PC-3 (cell line): ENCODE measurements at regions of chr3 and their contacts with region 1.

Region 1: DNA sequence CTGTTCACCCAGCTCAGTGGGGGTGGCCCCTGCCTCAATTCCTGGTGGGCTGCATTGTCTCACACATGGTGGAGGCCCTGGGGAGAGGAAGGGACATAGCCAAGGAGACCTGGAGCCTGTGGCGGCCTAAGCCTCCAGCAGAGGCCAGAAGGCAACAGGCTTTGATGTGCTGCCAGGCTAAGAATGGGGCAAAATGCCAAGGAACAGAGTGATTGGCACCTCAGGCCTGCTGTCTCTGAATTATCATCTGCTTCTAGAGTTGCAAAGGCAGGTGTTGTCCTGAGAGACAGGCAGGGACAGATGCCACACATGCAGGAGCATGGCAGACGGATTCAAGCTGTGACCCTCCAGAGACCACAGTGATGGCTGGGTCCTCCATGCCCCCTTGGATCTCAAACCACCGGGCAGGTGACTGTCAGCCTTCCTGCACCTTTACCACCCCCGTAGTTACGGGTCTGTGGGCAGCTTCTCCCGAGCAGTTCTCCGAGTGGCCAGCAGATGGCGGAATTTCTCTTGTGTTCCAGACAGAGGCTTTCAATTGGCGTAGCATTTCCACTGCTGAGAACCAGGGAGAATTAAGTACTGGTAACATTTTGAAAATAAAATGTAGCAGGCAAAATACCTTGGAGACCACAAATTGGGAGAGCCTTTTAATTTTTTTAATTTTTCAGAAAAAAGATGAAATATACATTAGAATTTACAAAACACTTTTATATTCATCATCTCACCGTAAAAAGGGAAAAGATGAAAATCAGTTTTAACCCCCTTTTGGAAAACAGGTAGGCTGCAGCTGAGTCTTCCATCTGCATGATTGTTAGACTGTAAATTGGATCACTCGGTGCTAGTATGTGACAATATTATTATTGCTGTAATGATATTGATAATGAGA is 525.5 kb upstream of the CFAP20DC start:
- DNase-seq: peak; percentile 92
- ATAC-seq: peak; percentile 75
- H3K4me3 ChIP-seq: no peak overlapping the region
- H3K27ac ChIP-seq: no peak overlapping the region
- H3K4me1 ChIP-seq: peaks cover 22% of the 10 kb centered on the region
- H3K27me3 ChIP-seq: no peaks in the 10 kb centered on the region
- CTCF ChIP-seq: peak; percentile 97

Region 2: GRCh38 chr3:58824285-58824684 is 751.1 kb before region 1 on chr3:
- CTCF ChIA-PET with region 1: no interaction called
- POLR2A ChIA-PET with region 1: no interaction called
- intact Hi-C with region 1: loop called (anchors 2 kb)
- DNase-seq: peak; percentile 81
- ATAC-seq: peak; percentile 81
- H3K4me3 ChIP-seq: no peak overlapping the region
- H3K27ac ChIP-seq: no peak overlapping the region
- H3K4me1 ChIP-seq: no peaks in the 10 kb centered on the region
- H3K27me3 ChIP-seq: no peaks in the 10 kb centered on the region
- CTCF ChIP-seq: peak; percentile 97

Region 3: DNA sequence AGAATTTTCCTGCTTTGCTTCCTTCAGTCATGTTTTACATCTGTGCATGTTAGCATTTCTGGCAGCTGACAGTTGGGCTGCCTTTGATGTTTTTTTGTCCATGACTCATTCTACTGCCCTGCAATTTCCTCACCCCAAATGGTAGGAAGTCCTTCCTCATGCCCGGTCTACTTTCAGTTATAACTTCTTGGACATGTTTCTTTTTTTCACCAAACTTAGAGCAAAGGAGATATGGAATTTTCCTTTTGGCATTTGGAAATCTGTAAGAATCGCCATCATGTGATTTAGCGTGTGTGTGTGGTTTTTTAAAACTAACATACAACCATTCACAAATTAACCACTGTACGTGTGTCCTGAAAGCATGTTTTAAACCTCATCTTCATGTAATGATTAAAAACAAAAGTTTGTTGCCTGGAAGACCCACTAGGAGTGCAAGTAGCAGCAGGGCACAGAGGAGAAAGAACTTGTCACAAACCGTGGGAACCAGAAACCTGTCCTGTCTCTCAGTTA is 94.8 kb before region 1 on chr3:
- CTCF ChIA-PET with region 1: no interaction called
- POLR2A ChIA-PET with region 1: no interaction called
- intact Hi-C with region 1: loop called (anchors 5 kb)
- DNase-seq: peak; percentile 74
- ATAC-seq: peak; percentile 76
- H3K4me3 ChIP-seq: no peak overlapping the region; the same call in 1 of the 2 replicates
- H3K27ac ChIP-seq: no peak overlapping the region
- H3K4me1 ChIP-seq: peaks cover 31% of the 10 kb centered on the region
- H3K27me3 ChIP-seq: no peaks in the 10 kb centered on the region
- CTCF ChIP-seq: no peak

Region 4: DNA sequence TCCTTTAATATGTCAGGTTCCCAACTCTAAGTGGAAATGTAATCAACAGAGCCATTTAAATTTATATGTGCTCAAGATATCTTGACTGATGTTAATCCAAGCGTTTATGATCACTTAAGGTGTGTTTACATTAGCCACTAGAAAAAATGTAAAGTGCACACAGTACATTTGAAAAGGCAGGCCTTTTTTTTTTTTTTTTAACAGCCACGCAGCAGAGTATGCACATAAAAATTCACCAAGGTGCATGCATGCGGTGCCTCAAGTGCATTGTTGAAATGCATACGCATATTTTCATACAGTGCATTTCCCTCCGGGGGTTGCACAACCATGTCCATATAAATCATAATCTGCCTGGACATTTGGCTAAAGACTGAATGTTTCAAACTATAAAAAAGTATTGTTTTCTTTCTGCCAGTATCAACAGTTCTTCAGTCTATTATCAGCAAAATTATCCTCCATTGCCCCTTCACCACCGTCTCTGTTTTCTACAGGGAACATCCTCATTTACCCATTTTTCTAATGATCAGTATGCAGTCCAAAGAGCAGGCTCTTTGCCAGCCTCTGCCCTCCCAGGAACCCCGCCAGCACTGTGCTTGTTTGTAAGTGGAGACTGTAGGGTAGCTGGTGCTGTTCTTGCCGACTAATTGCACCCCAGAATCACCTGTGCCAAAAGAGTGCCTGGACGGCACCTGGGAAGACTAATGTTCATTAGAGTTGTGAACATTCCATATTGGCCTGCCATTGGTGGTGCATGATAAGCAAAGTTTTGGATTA is 85.7 kb after region 1 on chr3:
- CTCF ChIA-PET with region 1: no interaction called
- POLR2A ChIA-PET with region 1: no interaction called
- intact Hi-C with region 1: loop called (anchors 1 kb)
- DNase-seq: peak; percentile 62
- ATAC-seq: peak; percentile 41
- H3K4me3 ChIP-seq: peak overlapping the region; percentile 8; the same call in 1 of the 2 replicates
- H3K27ac ChIP-seq: peak overlapping the region; percentile 48
- H3K4me1 ChIP-seq: peaks cover 49% of the 10 kb centered on the region
- H3K27me3 ChIP-seq: no peaks in the 10 kb centered on the region
- CTCF ChIP-seq: no peak

Region 5: DNA sequence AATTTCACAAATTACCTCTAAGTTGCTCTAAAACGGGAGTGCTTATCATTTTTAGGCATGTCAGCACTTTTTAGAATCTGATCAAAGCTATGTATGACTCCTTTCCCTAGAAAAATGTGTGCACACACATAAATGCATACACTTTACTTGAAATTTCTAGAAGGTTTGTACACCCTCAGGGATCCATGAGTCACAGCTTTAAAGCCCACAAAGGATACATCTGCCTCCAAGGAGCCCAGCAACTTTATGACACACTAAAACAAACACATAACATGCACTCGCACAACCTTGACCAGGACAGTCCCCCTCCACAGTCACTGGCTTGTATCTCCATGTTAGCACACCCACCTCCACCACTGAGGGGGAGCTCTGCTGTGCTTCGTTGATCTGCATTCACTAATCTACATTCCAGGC is 196.4 kb after region 1 on chr3:
- CTCF ChIA-PET with region 1: no interaction called
- POLR2A ChIA-PET with region 1: no interaction called
- intact Hi-C with region 1: loop called (anchors 5 kb)
- DNase-seq: peak; percentile 92
- ATAC-seq: peak; percentile 98
- H3K4me3 ChIP-seq: no peak overlapping the region
- H3K27ac ChIP-seq: no peak overlapping the region
- H3K4me1 ChIP-seq: peaks cover 15% of the 10 kb centered on the region
- H3K27me3 ChIP-seq: no peaks in the 10 kb centered on the region
- CTCF ChIP-seq: no peak

Region 6: DNA sequence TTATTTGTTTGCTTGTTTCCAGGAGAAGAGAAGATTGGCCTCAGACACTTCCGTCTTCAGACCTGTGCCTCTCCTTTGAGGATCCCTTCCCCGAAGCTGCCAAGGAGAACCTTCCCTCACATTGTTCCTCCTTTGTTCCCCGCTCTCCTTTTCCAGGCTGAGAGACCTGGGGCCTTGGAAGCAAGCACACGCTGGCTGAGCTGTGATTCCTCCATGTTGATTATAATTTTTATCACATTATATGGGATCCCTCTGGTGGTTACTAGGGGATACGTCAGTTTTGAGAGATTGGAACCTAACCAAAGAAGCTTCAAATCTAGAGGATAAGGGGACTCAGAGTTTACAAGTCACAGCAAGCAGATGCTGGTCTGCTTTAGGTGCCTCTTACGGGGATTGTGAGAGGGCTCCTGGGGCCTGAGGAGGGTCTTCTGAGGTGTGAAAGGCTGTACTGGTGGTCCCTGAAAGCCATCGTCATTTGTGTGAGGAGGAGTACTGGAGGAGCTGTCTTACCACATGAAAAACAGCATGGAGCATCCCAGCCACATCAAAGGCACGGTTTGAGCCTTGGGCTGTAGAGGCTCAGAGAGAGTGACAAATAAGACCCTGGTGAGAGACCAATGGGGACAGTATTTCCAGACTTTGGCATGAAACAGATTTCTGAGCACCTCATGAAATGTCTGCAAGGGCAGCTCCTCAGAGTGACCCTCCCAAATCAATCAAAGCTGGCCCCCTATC is 234.5 kb after region 1 on chr3:
- CTCF ChIA-PET with region 1: interaction called, 5 read pairs
- POLR2A ChIA-PET with region 1: interaction called, 6 read pairs
- intact Hi-C with region 1: loop called (anchors 1 kb)
- DNase-seq: peak; percentile 64
- ATAC-seq: peak; percentile 50
- H3K4me3 ChIP-seq: no peak overlapping the region
- H3K27ac ChIP-seq: no peak overlapping the region
- H3K4me1 ChIP-seq: peaks cover 10% of the 10 kb centered on the region; the same call in 1 of the 2 replicates
- H3K27me3 ChIP-seq: no peaks in the 10 kb centered on the region
- CTCF ChIP-seq: peak; percentile 66